Activated CD4-positive, alpha-beta T cell treated with anti-CD3 and anti-CD28 coated beads, Interleukin-2, amount 10 ng/mL, durations not matched to agents 24 days and 14 days (primary cell): ENCODE measurements at regions of chr10 and their contacts with region 1.

Region 1: GRCh38 chr10:14009371-14010100 is 321.2 kb downstream of the FRMD4A start:
- DNase-seq: peak; percentile 85
- H3K4me3 Mint-ChIP-seq: peak overlapping the region; percentile 82
- H3K27ac Mint-ChIP-seq: peak overlapping the region; percentile 82
- H3K4me1 Mint-ChIP-seq: peaks cover 28% of the 10 kb centered on the region
- H3K27me3 Mint-ChIP-seq: peaks cover 22% of the 10 kb centered on the region

Region 2: GRCh38 chr10:13787015-13787421 is 222.5 kb before region 1 on chr10:
- intact Hi-C with region 1: loop called (anchors 1 kb)
- DNase-seq: peak; percentile 94
- H3K4me3 Mint-ChIP-seq: peak overlapping the region; percentile 71
- H3K27ac Mint-ChIP-seq: peak overlapping the region; percentile 91
- H3K4me1 Mint-ChIP-seq: peaks cover 29% of the 10 kb centered on the region
- H3K27me3 Mint-ChIP-seq: no peaks in the 10 kb centered on the region